ENCODE measurements at regions of chr2 and their contacts with region 1.

Region 1: DNA sequence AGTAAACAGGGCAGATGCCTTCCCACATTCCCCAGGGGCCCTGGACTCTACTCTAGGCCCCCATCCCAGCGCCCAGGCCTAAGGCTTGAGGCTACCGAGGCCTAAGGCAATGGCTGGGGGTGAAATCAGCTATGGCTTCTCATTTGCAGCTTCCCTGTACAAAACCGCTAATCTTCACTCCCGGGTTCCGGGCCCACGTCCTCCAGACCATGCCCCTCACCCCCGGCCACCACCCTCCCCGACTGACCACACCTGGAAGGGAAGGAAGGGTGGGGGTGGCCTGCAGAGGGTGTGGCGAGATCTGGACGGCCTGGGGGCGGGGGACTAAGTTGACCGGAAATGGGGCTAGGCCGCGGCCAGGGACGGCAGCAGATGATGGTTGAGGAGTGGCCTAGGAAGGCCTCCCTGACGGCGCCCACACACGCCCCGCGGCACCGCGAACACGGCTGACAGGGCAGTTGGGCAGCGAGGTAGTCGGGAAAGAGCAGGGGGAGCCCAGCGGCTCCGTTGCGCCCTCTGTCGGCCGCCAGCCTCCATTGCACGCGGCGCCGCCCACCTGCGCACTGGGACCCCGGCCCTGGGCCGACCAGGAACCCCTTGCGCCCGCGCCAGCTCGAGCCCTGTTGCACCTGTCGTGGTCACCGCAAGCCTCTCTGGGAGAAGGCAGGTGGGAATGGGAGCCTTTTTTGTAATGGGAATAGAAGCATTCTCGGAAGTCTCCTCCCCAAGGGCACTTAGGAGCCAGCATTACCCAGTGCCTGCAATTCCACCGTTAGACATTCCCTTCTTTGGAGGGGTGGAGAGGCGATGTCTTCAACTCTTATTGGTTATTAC is 117.1 kb upstream of the STPG4 start:
- DNase-seq: peak; percentile 22 to 56
- ATAC-seq: peak; percentile 25 to 75
- H3K4me3 ChIP-seq: peak overlapping the region; percentile 33 to 41 (median 36)
- H3K27ac ChIP-seq: peak overlapping the region; percentile 76 to 83 (median 78)
- H3K4me1 ChIP-seq: peaks cover 25 to 38% of the 10 kb centered on the region in 2 donors
- H3K27me3 ChIP-seq: no peaks in the 10 kb centered on the region
- CTCF ChIP-seq: peak; percentile 97 to 98 (median 97)
- POLR2A ChIP-seq: no peak

Region 2: GRCh38 chr2:46915811-46916630 is 356.2 kb before region 1 on chr2:
- in situ Hi-C with region 1: no loop called
- intact Hi-C with region 1: loop called (anchors 2 kb)
- DNase-seq: peak; percentile 96 to 99
- ATAC-seq: peak; percentile 82 to 86
- H3K4me3 ChIP-seq: peak overlapping the region; percentile 93 to 100 (median 96)
- H3K27ac ChIP-seq: peak overlapping the region; percentile 96 to 100 (median 99)
- H3K4me1 ChIP-seq: peaks cover 36% of the 10 kb centered on the region in 2 donors
- H3K27me3 ChIP-seq: no peaks in the 10 kb centered on the region
- CTCF ChIP-seq: no peak
- POLR2A ChIP-seq: peak; percentile 47 to 69

Region 3: DNA sequence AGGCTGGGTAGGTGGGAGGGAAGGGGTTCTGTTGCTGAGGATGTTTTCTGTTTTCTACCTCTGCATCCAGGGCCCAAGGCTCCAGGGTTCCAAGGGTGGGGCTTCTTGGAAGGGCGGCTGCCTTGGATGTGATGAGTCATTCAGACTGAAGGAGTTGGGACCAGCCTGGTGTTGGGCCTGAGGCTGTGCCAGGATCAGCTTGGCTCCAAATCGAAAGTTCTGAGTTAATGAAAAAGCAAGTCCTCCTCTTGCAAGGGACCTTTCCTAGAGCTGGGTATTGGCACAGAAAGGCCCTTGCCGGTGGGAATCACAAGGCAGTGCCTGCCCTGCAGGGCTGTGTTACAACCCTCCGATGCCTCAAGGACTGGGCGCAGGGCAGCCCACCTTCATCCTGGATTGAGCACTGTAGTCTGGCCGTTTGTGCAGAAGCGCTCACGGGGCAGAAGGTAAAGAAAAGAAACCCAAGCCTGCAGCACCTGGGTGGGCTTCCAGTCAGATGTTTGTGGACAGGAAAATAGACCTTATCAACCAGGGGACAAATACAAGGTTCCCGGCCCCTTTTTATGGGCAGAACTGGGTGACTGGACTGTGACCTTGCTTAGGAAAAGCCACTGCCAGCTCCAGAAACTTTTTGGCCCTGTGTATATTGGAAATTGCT is 304.1 kb before region 1 on chr2:
- in situ Hi-C with region 1: no loop called
- intact Hi-C with region 1: no loop called
- DNase-seq: peak; percentile 76 to 92
- ATAC-seq: peak; percentile 69 to 76
- H3K4me3 ChIP-seq: peak overlapping the region in 3 of 4 donors; percentile 7 to 27 (median 7)
- H3K27ac ChIP-seq: peak overlapping the region; percentile 74 to 84 (median 79)
- H3K4me1 ChIP-seq: peaks cover 23 to 43% of the 10 kb centered on the region in 2 donors
- H3K27me3 ChIP-seq: no peaks in the 10 kb centered on the region
- CTCF ChIP-seq: no peak
- POLR2A ChIP-seq: no peak

Region 4: DNA sequence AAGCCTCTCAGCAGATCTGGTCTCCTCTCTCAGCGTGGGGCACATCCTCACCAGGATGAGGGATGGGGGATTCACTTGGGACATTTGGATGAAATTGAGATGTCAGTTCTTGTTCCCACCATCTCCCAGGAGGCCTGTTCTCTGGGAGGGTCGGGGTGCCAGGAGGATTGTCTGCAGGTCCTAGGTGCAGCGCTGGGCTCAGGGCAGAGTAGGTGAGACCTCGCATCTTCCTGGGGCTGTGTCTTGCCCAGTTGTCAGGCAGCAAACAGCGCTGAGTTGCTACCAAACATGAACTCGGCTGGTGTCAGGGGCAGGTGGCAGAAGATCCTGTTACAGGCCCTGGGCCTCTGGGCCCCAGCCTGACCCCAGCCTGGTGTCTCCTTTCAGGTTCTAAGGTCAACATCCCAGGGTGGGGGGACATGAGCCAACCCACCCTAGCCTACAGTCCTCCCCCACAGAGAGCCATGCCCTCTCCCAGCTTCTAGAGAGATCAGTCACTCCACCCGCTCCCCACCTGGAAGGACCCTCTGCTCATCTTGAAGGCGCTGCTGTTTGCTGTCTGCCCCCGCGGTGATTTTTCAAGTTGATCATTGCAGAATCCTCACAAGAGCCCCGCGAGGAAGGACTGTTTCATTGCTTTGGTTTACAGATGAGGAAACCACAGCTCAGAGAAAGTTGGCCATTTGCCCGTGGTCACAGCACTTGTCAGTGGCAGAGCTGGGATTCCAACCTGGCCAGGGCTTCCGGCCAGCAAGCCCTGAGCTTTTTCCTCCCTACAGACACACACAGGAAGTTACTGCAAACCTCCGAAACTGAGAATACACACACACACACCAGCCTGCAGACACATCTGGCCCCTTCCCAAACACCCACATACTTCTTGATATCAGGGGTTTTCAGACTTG is 201.1 kb before region 1 on chr2:
- in situ Hi-C with region 1: no loop called
- intact Hi-C with region 1: loop called (anchors 5 kb)
- DNase-seq: peak; percentile 61 to 83
- ATAC-seq: peak in 1 of 2 donors; percentile 55
- H3K4me3 ChIP-seq: no peak overlapping the region
- H3K27ac ChIP-seq: peak overlapping the region; percentile 78 to 84 (median 79)
- H3K4me1 ChIP-seq: peaks cover 61 to 63% of the 10 kb centered on the region in 2 donors
- H3K27me3 ChIP-seq: no peaks in the 10 kb centered on the region
- CTCF ChIP-seq: no peak
- POLR2A ChIP-seq: peak in 1 of 2 donors; percentile 10

Region 5: DNA sequence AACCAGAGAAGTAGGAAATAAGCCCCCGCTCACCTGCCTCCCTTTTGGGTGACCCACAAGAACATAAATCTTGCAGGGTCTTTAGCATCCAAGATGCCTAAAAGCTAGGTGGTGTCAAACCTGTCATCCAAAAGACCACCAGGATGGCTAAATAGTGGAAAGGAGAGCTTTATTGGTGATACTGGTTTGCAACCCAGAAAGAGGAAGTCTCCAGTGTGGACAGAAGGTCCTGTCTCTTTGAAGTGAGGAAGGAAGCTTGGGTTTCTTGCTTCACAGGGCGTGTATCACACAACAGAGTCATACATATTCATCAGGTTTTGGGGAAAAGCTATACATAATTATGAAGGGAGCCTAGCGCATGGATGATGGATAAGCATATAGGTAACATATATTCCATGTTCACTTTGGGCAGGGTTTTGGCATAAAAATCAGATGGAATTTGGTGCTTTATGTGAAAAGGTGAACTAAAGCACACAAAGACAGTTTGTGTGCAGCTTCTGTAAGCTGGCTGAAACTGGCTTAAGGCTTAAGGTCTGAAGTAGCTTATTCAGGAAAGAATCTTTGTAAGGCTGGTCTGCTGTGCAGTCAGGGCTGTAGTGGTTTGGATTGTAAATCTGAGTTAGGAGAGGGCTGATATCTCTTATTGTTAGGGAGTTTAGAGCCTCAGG is 28.5 kb after region 1 on chr2:
- in situ Hi-C with region 1: no loop called
- intact Hi-C with region 1: loop called (anchors 2 kb)
- DNase-seq: no peak
- ATAC-seq: no peak
- H3K4me3 ChIP-seq: no peak overlapping the region
- H3K27ac ChIP-seq: peak overlapping the region; percentile 74 to 79 (median 79)
- H3K4me1 ChIP-seq: peaks cover 24 to 36% of the 10 kb centered on the region in 2 donors
- H3K27me3 ChIP-seq: no peaks in the 10 kb centered on the region
- CTCF ChIP-seq: no peak
- POLR2A ChIP-seq: no peak

Region 6: GRCh38 chr2:47323009-47323821 is 51.0 kb after region 1 on chr2:
- in situ Hi-C with region 1: loop called in 1 of 4 experiments (anchors 10 kb)
- intact Hi-C with region 1: loop called (anchors 1 kb)
- DNase-seq: peak; percentile 43 to 57
- ATAC-seq: peak; percentile 91
- H3K4me3 ChIP-seq: no peak overlapping the region
- H3K27ac ChIP-seq: no peak overlapping the region
- H3K4me1 ChIP-seq: peaks cover 3 to 4% of the 10 kb centered on the region in 2 donors
- H3K27me3 ChIP-seq: no peaks in the 10 kb centered on the region
- CTCF ChIP-seq: peak; percentile 96 to 99 (median 98)
- POLR2A ChIP-seq: no peak

Measured in gastrocnemius medialis (tissue), 4 donors.